WTC11 (cell line): ENCODE measurements at regions of chr17 and their contacts with region 1.

Region 1: DNA sequence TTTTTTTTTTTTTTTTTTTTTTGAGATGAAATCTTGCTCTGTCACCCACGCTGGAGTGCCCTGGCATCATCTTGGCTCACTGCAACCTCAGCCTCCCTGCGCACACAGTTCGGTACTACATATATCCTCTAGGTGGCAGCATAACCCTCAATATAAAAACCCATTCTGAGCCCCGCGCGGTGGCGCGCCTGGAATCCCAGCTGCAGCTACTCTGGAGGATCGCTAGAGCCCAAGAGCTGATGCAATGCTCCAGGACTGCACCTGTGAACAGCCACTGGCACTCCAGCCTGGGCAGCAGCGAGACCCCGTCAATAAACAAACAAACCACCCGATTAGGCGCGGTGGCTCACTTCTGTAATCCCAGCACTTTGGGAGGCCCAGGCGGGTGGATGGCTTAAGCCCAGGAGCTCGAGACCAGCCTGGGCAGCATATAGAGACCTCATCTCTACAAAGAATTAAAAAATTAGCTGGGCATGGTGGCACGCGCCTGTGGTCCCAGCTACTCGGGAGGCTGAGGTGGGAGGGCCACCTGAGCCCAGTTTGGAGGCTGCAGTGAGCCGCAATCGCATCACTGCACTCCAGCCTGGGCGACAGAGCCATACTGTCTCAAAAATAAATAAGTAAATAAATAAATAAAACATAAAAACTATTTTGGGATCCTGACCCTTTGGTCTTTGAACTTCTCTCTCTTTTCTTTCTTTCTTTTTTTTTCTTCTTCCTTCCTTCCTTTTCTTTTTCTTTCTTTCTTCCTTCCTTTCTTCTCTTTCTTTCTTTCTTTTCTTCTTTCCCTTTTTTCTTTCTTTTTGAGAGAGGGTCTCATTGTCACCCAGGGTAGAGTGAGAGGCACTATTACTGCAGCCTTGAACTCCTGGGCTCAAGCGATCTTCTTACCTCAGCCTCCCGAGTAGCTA is 15.4 kb upstream of the AKAP10 start:
- DNase-seq: peak; percentile 93
- ATAC-seq: peak; percentile 98
- H3K4me3 Mint-ChIP-seq: peak overlapping the region; percentile 39
- H3K27ac Mint-ChIP-seq: peak overlapping the region; percentile 59; the same call in 1 of the 2 replicates
- H3K4me1 Mint-ChIP-seq: peaks cover 4% of the 10 kb centered on the region
- H3K27me3 Mint-ChIP-seq: no peaks in the 10 kb centered on the region
- CTCF ChIP-seq: peak; percentile 72

Region 2: GRCh38 chr17:19977311-19978208 is 15.5 kb before region 1 on chr17 and contains the start of gene AKAP10:
- CTCF ChIA-PET with region 1: interaction called, 14 read pairs
- POLR2A ChIA-PET with region 1: no interaction called
- DNase-seq: peak; percentile 94
- ATAC-seq: peak; percentile 70
- H3K4me3 Mint-ChIP-seq: peak within 1 kb of the TSS; percentile 92
- H3K27ac Mint-ChIP-seq: peak within 1 kb of the TSS; percentile 97
- H3K4me1 Mint-ChIP-seq: peaks cover 31% of the 10 kb centered on the region
- H3K27me3 Mint-ChIP-seq: peaks cover 3% of the 10 kb centered on the region; the same call in 1 of the 2 replicates
- CTCF ChIP-seq: no peak
- total RNA-seq, gene AKAP10: 29.9 to 33.6 TPM (median 33.2 TPM) in 3 replicates

Region 3: GRCh38 chr17:20095336-20096080 is 102.5 kb after region 1 on chr17:
- CTCF ChIA-PET with region 1: interaction called, 10 read pairs
- POLR2A ChIA-PET with region 1: no interaction called
- DNase-seq: peak; percentile 54
- ATAC-seq: peak; percentile 87
- H3K4me3 Mint-ChIP-seq: no peak overlapping the region
- H3K27ac Mint-ChIP-seq: no peak overlapping the region
- H3K4me1 Mint-ChIP-seq: peaks cover 49% of the 10 kb centered on the region
- H3K27me3 Mint-ChIP-seq: no peaks in the 10 kb centered on the region; the same call in 1 of the 2 replicates
- CTCF ChIP-seq: no peak

Region 4: DNA sequence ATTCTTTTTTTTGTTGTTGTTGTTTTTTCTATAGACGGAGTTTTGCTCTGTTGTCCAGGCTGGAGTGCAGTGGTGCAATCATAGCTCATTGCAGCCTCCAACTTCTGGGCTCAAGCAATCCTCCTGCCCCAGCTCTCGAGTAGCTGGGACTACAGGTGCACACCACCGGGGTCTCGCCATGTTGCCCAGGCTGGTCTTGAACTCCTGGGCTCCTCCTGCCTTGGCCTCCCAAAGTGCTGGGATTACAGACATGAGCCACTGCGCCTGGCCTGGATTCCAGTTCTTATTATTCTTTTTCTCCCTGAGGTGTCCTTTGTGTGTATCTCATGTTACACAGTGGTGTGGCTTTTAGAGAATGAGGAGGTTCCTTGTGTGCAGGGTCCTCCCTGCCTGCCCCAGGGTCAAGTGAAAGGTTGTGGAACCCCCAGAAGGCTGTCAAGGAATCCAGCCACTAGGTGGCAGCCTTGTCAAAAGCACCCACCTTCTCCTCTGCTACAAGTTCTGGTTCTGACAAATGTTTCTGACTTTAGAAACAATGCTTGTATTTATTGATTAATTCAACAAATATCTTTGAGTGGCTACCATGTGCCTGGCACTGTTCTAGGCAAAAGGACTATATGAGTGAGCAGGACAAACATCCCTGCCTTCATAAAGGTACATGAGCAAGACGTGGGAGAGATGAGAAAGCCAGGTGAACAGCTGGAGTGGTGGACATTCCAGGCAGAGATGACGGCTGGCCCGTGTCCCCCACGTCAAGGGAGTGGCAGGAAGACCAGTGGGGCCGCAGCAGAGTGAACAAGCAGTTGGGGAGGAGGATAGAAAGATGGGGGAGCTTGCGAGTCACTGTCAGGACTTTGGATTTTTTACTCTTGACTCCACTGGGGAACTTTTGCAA is 128.5 kb after region 1 on chr17:
- CTCF ChIA-PET with region 1: interaction called, 18 read pairs
- POLR2A ChIA-PET with region 1: no interaction called
- DNase-seq: peak; percentile 85
- ATAC-seq: peak; percentile 90
- H3K4me3 Mint-ChIP-seq: no peak overlapping the region
- H3K27ac Mint-ChIP-seq: no peak overlapping the region
- H3K4me1 Mint-ChIP-seq: peaks cover 10% of the 10 kb centered on the region
- H3K27me3 Mint-ChIP-seq: no peaks in the 10 kb centered on the region
- CTCF ChIP-seq: peak; percentile 90